ENCODE measurements at regions of chr4 and their contacts with region 1.

Region 1: DNA sequence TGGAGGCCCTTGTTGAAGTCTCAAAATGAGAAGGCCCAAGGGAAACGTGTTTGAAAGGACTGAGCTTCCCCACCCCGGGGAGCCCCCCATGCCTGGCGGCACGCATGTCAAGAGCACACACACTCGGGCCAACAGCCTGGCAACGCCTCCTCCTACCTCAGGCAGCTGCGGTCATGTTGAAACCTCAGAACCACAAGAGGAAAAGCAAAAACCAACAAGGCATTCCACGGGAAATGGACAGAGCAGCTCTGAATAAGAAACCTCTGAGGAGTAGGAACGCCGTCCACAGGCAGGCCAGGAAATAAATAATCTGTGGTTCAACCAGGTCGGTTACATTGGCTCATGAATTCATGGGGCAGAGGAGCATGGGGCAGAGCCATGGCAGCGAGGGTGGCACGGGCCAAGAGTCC is 95.7 kb upstream of the AFAP1 start:
- DNase-seq: peak in 1 of 14 experiments; percentile 17
- ATAC-seq: no peak
- H3K4me3 ChIP-seq: no peak overlapping the region
- H3K4me3 Mint-ChIP-seq: no peak overlapping the region
- H3K27ac ChIP-seq: no peak overlapping the region
- H3K27ac Mint-ChIP-seq: no peak overlapping the region
- H3K4me1 ChIP-seq: peaks cover 13% of the 10 kb centered on the region
- H3K4me1 Mint-ChIP-seq: peaks cover 10% of the 10 kb centered on the region
- H3K27me3 ChIP-seq: peaks cover 0 to 5% of the 10 kb centered on the region in 2 experiments
- H3K27me3 Mint-ChIP-seq: peaks cover 5% of the 10 kb centered on the region
- CTCF ChIP-seq: no peak

Region 2: DNA sequence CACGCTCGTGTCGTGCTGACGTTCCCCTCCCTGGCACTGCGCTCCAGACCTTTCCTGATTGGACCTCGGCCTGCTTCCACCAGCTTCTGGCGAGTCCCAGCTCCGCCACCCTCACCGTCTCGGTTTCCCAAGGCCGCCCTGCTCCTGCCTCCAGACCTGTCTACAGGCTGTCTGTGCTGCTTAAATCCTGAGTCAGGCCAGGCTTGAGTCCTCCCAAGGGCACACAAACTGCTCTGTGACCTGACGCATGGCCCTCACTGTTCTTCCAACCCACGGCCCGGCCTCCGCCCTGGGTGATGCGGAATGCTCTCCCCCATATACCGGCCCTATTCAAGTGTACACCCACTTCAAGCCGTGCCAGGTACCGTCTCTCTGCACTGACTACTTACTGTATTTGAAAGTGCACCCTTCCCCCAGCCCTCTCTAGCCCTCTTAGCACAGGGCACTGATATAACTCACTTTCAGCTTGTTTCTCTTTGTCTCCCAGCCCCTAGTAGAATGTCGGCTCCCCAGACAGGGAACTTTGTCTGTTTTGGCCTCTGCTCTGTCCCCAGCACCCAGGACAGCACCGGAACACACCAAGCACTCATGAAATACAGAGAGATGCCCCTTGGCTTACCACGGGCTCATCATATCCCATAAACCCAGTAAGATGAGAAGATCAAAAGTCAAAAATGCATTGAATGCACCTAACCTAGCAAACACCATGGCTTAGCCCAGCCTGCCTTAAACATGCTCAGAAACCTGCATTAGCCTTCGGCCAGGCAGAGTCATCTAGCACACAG is 32.7 kb before region 1 on chr4:
- CTCF ChIA-PET with region 1: no interaction called
- POLR2A ChIA-PET with region 1: no interaction called
- intact Hi-C with region 1: loop called in 1 of 2 experiments (anchors 1 kb)
- DNase-seq: no peak
- ATAC-seq: no peak
- H3K4me3 ChIP-seq: no peak overlapping the region
- H3K4me3 Mint-ChIP-seq: no peak overlapping the region
- H3K27ac ChIP-seq: no peak overlapping the region
- H3K27ac Mint-ChIP-seq: no peak overlapping the region
- H3K4me1 ChIP-seq: no peaks in the 10 kb centered on the region
- H3K4me1 Mint-ChIP-seq: no peaks in the 10 kb centered on the region
- H3K27me3 ChIP-seq: peaks cover 0 to 2% of the 10 kb centered on the region in 2 experiments
- H3K27me3 Mint-ChIP-seq: no peaks in the 10 kb centered on the region
- CTCF ChIP-seq: no peak